Activated naive CD4-positive, alpha-beta T cell treated with anti-CD3 and anti-CD28 coated beads for 36 hours (primary cell): ENCODE measurements at regions of chr4 and their contacts with region 1.

Region 1: DNA sequence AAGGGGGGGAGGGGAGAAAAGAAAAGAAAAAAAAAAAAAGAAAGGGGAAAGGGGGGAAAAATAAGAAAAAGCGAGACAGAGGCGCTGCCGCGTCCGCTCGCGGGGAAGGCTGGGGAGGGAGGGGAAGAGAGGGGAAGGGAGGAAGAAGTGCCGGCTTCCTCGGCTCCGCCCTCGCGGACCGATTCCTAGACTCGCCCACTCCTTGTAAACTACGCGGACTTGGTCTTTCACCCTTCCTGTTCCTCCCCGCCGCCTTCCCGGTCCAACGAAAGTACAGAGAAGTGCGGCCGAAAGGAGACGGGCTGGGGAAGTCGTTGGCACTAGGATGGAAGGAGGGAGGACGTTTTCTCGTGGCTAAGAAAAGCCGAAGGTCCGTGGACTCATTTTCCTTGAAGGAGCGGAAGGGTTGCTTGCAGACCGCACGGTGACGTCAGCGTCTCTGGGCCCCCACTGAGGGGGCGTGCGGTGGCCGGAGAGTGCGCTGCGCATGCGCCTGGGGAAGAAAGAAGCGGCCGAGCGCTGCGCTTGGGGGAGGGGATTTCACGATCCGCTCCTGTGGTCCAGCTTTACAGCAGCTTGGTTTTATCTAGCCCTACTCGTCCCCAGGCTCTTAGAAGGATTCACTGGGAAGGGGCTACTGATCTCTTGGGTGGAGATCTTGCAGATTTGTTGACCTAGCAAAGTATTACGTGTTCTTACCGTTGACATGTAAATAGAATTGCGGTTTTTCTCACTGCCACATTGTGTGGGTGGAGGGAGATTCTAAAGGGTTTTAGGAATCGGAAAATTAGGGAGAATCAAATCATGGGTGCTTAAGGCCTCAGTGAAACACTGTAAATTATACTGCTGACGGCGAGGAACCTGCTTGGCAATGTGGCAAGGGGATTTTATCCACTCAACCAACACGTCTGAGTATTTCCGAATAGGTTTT is at the start of gene CCNI:
- DNase-seq: peak; percentile 93
- H3K4me3 Mint-ChIP-seq: peak within 1 kb of the TSS; percentile 99
- H3K27ac Mint-ChIP-seq: peak within 1 kb of the TSS; percentile 100
- H3K4me1 Mint-ChIP-seq: peaks cover 40% of the 10 kb centered on the region
- H3K27me3 Mint-ChIP-seq: no peaks in the 10 kb centered on the region
- total RNA-seq, gene CCNI: 211 to 218 TPM

Region 2: DNA sequence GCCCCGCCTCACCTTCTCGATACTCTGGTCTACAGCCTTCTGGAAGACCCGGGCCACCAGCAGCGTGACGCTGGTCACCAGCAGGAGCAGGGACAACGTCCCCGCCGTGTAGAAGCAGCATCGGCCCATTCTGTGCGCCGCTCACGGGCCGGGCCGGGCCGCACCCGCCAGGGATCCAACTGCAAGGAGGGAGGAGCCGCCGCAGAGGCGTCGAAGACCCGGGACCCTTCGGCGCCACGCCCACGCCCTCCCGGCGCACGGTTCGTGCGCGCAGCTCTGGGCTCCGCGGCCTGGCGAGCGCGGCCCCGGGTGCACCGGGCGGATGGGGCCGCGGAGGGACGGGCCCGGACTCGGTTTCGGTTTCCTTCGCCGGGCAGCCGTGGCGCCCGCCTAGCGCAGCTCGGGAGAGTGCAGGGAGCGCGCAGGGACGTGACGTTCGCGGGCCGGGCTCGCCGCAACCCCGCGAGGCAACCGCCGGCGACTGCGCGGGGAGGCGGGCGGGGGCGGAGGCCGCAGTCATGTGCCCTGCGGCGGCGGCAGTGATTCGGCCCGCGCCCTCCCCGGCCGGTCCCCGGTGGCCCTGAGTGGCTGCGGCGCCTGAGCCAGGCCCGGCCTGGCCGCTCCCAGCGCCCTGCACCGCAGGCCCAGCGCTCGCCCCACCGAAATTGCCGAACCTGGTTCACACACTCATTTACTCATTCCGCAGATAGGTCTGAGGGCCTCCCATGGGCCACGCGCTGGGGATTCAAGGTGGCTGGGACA is 862.5 kb before region 1 on chr4 and contains the start of gene SCARB2:
- CTCF ChIA-PET with region 1: no interaction called
- intact Hi-C with region 1: loop called (anchors 1 kb)
- DNase-seq: peak; percentile 76
- H3K4me3 Mint-ChIP-seq: peak within 1 kb of the TSS; percentile 76
- H3K27ac Mint-ChIP-seq: peak within 1 kb of the TSS; percentile 74
- H3K4me1 Mint-ChIP-seq: peaks cover 31% of the 10 kb centered on the region
- H3K27me3 Mint-ChIP-seq: no peaks in the 10 kb centered on the region
- total RNA-seq, gene SCARB2: 5.4 to 7.8 TPM

Region 3: GRCh38 chr4:76949276-76950051 is 126.7 kb before region 1 on chr4 and contains the start of gene SEPTIN11:
- CTCF ChIA-PET with region 1: no interaction called
- intact Hi-C with region 1: loop called (anchors 1 kb)
- DNase-seq: peak; percentile 81
- H3K4me3 Mint-ChIP-seq: peak within 1 kb of the TSS; percentile 81
- H3K27ac Mint-ChIP-seq: peak within 1 kb of the TSS; percentile 59
- H3K4me1 Mint-ChIP-seq: peaks cover 13% of the 10 kb centered on the region
- H3K27me3 Mint-ChIP-seq: peaks cover 31% of the 10 kb centered on the region
- total RNA-seq, gene SEPTIN11: 24.0 TPM

Region 4: GRCh38 chr4:77031544-77031943 is 44.6 kb before region 1 on chr4:
- CTCF ChIA-PET with region 1: no interaction called
- intact Hi-C with region 1: loop called (anchors 1 kb)
- DNase-seq: peak; percentile 26
- H3K4me3 Mint-ChIP-seq: no peak overlapping the region
- H3K27ac Mint-ChIP-seq: no peak overlapping the region
- H3K4me1 Mint-ChIP-seq: peaks cover 44% of the 10 kb centered on the region
- H3K27me3 Mint-ChIP-seq: peaks cover 3% of the 10 kb centered on the region

Region 5: DNA sequence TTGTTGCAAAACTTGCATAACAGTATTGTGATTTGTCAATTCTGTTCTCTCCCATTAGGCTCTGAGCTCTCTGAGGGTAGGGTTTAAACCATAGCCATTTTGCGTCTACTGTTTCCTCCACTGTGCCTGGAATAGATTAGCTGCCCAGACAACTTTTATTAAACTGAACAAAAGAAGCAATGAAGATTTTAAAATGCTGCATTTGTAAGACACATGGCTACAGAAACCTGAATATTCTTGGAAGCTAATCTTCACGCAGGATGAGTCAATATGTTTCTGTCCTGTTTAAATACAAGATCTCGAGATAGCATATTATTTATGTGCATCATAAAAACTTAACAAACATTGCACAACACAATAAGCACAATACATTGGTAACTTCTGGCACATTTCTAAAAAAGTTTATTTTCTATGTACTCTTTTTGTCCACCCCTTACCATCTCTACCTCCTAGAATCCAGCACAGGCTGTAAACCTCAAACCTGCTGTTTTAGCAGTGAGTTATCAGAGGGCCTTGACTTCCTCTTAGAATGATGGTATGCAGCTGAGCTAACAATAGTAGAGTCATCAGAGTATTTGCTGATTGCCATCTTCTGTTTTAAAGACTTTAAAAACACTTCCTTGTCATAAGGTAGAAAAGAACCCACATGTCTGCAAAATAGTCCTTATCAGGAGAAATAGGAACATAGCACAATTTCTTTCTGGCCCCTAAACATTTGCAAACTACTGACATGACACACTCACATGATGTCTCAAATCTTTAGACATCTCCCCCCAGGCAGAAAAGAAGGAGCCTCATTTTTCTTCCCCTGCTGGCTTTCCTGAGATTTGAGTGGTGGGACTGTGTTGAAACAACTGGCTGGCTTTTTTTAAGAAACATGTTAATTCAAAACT is 70.3 kb after region 1 on chr4:
- CTCF ChIA-PET with region 1: no interaction called
- intact Hi-C with region 1: no loop called
- DNase-seq: no peak
- H3K4me3 Mint-ChIP-seq: no peak overlapping the region
- H3K27ac Mint-ChIP-seq: no peak overlapping the region
- H3K4me1 Mint-ChIP-seq: peaks cover 16% of the 10 kb centered on the region
- H3K27me3 Mint-ChIP-seq: no peaks in the 10 kb centered on the region

Region 6: GRCh38 chr4:77263247-77263646 is 187.1 kb after region 1 on chr4:
- CTCF ChIA-PET with region 1: no interaction called
- intact Hi-C with region 1: no loop called
- DNase-seq: no peak
- H3K4me3 Mint-ChIP-seq: no peak overlapping the region
- H3K27ac Mint-ChIP-seq: no peak overlapping the region
- H3K4me1 Mint-ChIP-seq: no peaks in the 10 kb centered on the region
- H3K27me3 Mint-ChIP-seq: peaks cover 2% of the 10 kb centered on the region

Region 7: GRCh38 chr4:77586951-77587383 is 510.8 kb after region 1 on chr4:
- CTCF ChIA-PET with region 1: no interaction called
- intact Hi-C with region 1: loop called (anchors 2 kb)
- DNase-seq: peak; percentile 87
- H3K4me3 Mint-ChIP-seq: peak overlapping the region; percentile 17
- H3K27ac Mint-ChIP-seq: peak overlapping the region; percentile 80
- H3K4me1 Mint-ChIP-seq: peaks cover 49% of the 10 kb centered on the region
- H3K27me3 Mint-ChIP-seq: peaks cover 15% of the 10 kb centered on the region